ENCODE measurements at regions of chr7 and their contacts with region 1.

Region 1: GRCh38 chr7:47266131-47266706 is 315.7 kb downstream of the TNS3 start:
- DNase-seq: peak; percentile 80
- H3K4me3 ChIP-seq: no peak overlapping the region
- H3K27ac ChIP-seq: peak overlapping the region; percentile 69
- H3K4me1 ChIP-seq: no peaks in the 10 kb centered on the region
- H3K27me3 ChIP-seq: no peaks in the 10 kb centered on the region
- CTCF ChIP-seq: peak; percentile 88

Region 2: GRCh38 chr7:47435889-47436312 is 169.7 kb after region 1 on chr7:
- intact Hi-C with region 1: loop called (anchors 5 kb)
- DNase-seq: peak; percentile 76
- H3K4me3 ChIP-seq: no peak overlapping the region
- H3K27ac ChIP-seq: no peak overlapping the region
- H3K4me1 ChIP-seq: no peaks in the 10 kb centered on the region
- H3K27me3 ChIP-seq: no peaks in the 10 kb centered on the region
- CTCF ChIP-seq: peak; percentile 70

Region 3: DNA sequence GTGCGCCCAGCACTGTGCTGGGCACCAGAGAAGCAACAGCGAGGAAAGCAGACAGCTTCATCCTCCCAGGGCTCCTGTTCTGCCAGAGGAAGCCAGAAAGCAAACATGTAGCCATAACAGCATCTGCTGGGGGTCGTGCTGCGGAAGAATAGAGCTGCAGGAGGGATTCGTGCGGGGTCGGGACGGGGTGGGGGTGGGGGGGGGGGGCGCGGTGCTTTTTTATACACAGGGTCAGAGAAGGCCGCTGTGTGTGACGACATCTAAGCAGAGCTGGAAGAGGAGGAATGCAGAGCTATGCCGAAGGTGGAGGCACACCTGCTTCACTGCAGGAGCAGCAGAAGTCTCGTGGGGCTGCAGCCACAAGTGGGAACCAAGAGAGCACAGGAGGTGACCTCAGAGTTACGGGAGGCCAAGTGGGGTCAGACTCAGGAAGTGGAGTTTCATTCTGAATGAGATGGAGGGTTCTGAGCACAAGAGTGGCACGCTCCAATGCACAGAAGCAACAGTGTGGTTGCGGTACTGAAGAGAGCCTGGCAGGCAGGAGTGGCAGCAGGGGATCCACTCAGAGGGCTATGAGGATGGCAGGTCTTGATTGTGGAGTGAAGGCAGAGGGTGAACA is 671.0 kb after region 1 on chr7:
- intact Hi-C with region 1: loop called (anchors 5 kb)
- DNase-seq: no peak
- H3K4me3 ChIP-seq: no peak overlapping the region
- H3K27ac ChIP-seq: no peak overlapping the region
- H3K4me1 ChIP-seq: peaks cover 11% of the 10 kb centered on the region
- H3K27me3 ChIP-seq: no peaks in the 10 kb centered on the region
- CTCF ChIP-seq: no peak